ENCODE measurements at regions of chr22 and their contacts with region 1.

Region 1: GRCh38 chr22:25696763-25697667 is 45.0 kb upstream of the MYO18B start:
- DNase-seq: no peak
- ATAC-seq: no peak
- H3K4me3 ChIP-seq: no peak overlapping the region
- H3K27ac ChIP-seq: no peak overlapping the region
- H3K4me1 ChIP-seq: no peaks in the 10 kb centered on the region
- H3K27me3 ChIP-seq: no peaks in the 10 kb centered on the region

Region 2: GRCh38 chr22:25465949-25466348 is 231.1 kb before region 1 on chr22:
- intact Hi-C with region 1: loop called (anchors 1 to 5 kb)
- DNase-seq: no peak
- ATAC-seq: no peak
- H3K4me3 ChIP-seq: no peak overlapping the region
- H3K27ac ChIP-seq: no peak overlapping the region
- H3K4me1 ChIP-seq: no peaks in the 10 kb centered on the region
- H3K27me3 ChIP-seq: no peaks in the 10 kb centered on the region

Region 3: DNA sequence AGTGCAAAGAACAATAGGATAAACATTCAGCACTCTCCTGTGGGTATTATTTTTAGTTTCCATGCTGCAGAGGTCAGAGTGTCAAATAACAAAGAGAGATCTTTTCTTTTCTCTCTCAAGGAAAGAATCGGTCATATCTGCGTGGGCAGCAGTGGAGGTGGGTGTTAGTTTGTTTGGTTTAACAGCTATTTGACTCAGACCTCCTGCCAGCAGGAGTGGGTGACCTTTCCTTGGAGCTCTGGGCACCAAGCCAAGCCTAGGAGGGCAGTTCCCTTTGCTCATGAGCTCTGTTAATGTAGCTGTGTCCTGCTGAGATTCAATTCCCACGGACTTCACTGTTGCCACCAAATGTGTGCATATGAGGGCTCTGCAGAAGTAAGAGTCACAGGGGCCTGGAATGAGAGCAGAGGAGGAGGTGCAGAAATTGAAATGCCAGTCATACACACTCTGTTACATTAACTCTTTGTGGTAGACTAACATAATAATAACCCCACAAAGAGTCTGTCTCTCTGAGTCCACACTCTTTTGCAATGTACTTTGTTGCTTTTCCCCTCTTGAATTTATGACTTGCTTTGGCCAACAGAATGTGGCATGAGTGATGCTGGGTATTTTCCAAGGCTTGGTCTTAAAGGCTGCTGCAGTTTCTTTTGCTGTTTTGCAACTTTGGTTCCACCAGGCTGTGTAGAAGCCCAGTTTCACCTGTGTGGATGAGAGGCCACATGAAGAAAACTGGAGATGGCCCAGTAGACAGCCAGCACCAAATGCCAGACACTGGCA is 208.6 kb before region 1 on chr22:
- intact Hi-C with region 1: loop called in 1 of 4 experiments (anchors 10 kb)
- DNase-seq: peak; percentile 69 to 85 (median 81)
- ATAC-seq: peak; percentile 64 to 83
- H3K4me3 ChIP-seq: no peak overlapping the region
- H3K27ac ChIP-seq: no peak overlapping the region
- H3K4me1 ChIP-seq: peaks cover 5% of the 10 kb centered on the region
- H3K27me3 ChIP-seq: no peaks in the 10 kb centered on the region

Region 4: GRCh38 chr22:25546751-25547150 is 150.3 kb before region 1 on chr22:
- intact Hi-C with region 1: loop called in 2 of 4 experiments (anchors 10 kb)
- DNase-seq: peak in 1 of 3 donors; percentile 49
- ATAC-seq: peak in 1 of 2 donors; percentile 39
- H3K4me3 ChIP-seq: no peak overlapping the region
- H3K27ac ChIP-seq: no peak overlapping the region
- H3K4me1 ChIP-seq: no peaks in the 10 kb centered on the region
- H3K27me3 ChIP-seq: no peaks in the 10 kb centered on the region

Region 5: DNA sequence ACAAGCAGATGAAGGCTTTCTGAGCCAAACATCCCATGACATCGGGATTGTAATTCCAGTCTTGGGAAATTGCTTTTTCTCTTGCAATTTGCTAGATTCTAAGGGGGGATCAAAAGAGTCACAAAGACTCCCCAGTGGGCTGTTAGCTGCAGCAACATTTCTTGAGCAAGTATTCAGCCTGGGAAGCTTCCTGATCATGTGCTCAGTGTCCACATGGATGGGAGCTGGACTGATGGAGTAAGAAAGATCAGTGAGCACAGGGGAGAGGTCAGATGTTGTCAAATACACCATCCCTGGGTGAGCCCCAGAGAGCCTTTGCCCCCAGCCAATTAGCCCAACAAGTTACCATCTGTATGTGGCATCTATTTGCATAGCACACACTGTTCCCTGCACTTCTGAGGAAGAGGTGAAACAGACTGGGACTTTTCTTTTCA is 142.8 kb before region 1 on chr22:
- intact Hi-C with region 1: loop called in 2 of 4 experiments (anchors 10 kb)
- DNase-seq: no peak
- ATAC-seq: no peak
- H3K4me3 ChIP-seq: no peak overlapping the region
- H3K27ac ChIP-seq: no peak overlapping the region
- H3K4me1 ChIP-seq: peaks cover 2% of the 10 kb centered on the region
- H3K27me3 ChIP-seq: no peaks in the 10 kb centered on the region

Region 6: DNA sequence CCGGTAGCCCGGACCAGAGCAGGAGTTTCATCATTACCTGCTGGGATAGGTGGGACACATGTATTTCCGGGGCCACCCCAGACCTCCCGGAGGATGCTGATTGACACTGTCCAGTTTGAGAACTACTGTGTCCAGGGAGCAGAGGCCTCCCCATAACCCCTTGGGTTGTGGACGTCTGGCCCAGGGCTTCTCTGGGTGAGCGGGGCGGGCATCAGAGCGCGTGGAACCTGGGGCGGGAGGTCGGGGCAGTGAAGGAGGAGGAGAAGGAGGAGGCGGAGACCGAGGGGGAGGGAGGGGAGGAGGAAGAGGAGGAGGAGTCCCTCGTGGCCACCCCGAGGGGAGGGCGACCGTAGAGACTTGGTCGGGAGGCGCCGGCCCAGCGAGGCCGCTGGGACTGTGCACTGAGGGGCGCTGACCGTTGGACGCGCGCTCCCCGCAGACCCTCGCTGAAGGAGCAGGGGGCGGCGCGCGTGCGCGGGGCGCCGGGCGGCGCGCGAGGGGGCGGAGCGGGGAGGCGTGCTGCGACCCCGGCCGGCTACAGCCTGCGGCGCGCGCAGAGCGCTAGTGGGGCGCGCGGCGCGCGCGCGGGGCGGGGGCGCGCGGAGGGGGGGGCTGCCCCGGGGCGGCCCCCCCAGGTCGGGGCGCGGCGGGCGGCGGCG is 132.6 kb before region 1 on chr22 and contains the start of gene GRK3:
- intact Hi-C with region 1: loop called in 2 of 4 experiments (anchors 10 kb)
- DNase-seq: peak; percentile 76 to 88 (median 82)
- ATAC-seq: peak; percentile 88 to 90
- H3K4me3 ChIP-seq: peak within 1 kb of the TSS; percentile 86
- H3K27ac ChIP-seq: peak within 1 kb of the TSS; percentile 19
- H3K4me1 ChIP-seq: no peaks in the 10 kb centered on the region
- H3K27me3 ChIP-seq: no peaks in the 10 kb centered on the region
- total RNA-seq, gene GRK3: 11.0 to 18.7 (median 13.2) TPM